Mammary epithelial cell (primary cell): ENCODE measurements at regions of chr13 and their contacts with region 1.

Region 1: DNA sequence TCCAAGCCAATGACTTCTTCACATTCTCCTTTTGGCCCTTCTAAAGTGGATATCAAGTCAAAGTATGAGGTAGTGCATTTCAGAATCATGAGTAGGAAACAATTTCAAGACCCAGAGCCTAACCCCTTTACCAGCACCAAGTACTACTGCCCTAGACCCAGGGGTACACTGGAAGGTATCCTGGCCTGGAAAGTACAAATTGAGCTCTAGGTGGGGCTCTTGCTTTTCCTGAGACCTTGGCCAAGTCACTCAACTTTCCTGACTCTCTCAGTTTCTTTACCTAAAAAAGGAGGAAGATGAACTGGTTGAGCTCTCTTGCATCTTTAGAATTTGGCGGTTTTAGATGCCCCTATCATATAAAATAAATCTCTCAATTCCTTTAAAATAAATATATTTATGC is 204.7 kb downstream of the FGF14 start:
- DNase-seq: peak; percentile 30
- H3K4me3 ChIP-seq: no peak overlapping the region
- H3K27ac ChIP-seq: no peak overlapping the region
- H3K4me1 ChIP-seq: peaks cover 43% of the 10 kb centered on the region
- H3K27me3 ChIP-seq: no peaks in the 10 kb centered on the region
- CTCF ChIP-seq: peak; percentile 48 to 65

Region 2: DNA sequence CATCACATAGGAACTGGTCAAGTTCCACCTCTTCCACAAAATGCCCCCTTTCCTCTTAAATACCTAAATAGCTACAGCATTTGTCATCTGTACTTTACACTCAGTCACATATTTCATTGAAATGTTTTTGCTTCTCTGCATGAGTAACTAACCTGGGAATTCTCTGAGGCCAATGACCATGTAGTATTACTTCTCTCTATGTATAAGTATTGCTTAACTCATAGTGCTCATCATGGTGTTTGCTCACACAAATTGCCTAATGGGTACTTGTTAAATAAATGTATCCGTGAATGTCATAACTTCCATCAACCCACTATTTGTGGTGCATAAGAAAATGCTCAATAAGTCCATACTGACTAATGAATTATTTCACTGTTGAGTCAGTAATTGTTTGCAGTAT is 89.1 kb after region 1 on chr13:
- CTCF ChIA-PET with region 1: no interaction called
- dilution Hi-C with region 1: no loop called
- in situ Hi-C with region 1: no loop called
- intact Hi-C with region 1: loop called (anchors 2 kb)
- DNase-seq: peak; percentile 93
- H3K4me3 ChIP-seq: no peak overlapping the region
- H3K27ac ChIP-seq: peak overlapping the region; percentile 88
- H3K4me1 ChIP-seq: peaks cover 31% of the 10 kb centered on the region
- H3K27me3 ChIP-seq: no peaks in the 10 kb centered on the region
- CTCF ChIP-seq: no peak

Region 3: DNA sequence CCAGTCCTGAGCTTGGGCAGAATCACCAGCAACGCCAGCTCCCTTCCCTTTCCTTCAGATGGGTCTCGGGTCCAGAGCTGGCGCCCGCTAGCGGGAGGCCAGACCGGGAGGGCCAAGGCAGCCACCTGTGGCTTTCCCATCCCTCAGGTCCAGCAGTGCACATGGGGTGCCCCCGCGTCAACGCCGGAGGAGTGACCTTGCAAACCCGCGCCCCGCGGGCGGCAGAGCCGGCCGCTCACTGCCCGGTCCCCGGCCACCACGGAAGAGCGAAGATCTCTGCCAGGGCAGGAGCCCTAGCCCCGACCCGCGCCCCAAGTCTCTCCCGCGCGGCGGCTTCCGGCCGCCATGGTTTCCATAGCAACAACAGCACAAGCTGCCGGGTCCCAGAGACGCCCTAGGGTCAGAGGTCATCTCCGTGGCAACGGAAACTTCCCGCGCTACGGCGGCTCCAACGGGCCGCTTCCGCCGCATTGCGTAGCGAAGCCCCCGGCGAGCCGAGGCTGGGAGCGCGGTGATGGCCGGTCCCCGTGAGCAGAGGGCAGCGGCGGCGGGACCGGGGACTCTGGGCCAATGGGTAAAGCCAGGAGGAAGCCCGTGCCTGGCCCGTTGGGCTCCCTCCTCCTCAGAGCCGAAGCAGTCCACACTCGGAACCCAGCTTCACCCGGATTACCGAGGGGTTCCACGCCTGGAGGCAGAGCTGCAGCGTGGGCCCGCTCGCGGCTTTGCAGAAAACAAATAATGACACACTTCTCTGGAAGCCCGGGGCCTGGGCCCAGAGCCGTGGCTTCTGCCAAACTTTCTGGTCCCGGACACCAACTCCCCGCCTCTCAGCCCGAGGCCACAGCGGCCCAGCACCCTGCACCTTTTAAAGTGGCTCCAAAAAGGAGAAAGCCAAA is 197.2 kb after region 1 on chr13:
- CTCF ChIA-PET with region 1: no interaction called
- dilution Hi-C with region 1: no loop called
- in situ Hi-C with region 1: no loop called
- intact Hi-C with region 1: loop called (anchors 5 kb)
- DNase-seq: peak; percentile 48
- H3K4me3 ChIP-seq: peak overlapping the region; percentile 60 to 81 (median 65)
- H3K27ac ChIP-seq: peak overlapping the region; percentile 38
- H3K4me1 ChIP-seq: peaks cover 10% of the 10 kb centered on the region
- H3K27me3 ChIP-seq: no peaks in the 10 kb centered on the region
- CTCF ChIP-seq: peak in 1 of 2 donors; percentile 48

Region 4: DNA sequence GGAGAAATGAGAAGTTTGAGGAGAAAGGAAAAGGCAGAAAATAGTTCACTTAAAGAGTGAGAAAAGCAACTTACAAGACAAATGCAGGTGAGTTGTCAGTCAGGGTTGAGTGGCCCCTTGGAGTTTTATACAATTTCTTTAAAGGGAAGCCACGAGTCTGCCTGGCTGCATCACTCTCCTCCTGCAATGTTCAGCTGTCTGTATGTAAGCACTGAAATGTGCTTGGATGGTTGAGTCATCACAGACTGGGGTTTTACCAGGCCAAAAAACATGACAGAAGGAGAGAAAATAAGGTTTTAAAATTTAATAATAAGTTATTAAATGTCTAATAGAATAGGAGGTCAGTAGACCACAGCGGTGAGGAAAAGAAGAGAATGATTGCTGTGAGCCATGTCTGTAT is 255.6 kb after region 1 on chr13:
- CTCF ChIA-PET with region 1: no interaction called
- dilution Hi-C with region 1: no loop called
- in situ Hi-C with region 1: loop called in 1 of 2 experiments (anchors 10 kb)
- intact Hi-C with region 1: loop called (anchors 1 kb)
- DNase-seq: peak; percentile 9
- H3K4me3 ChIP-seq: no peak overlapping the region
- H3K27ac ChIP-seq: no peak overlapping the region
- H3K4me1 ChIP-seq: no peaks in the 10 kb centered on the region
- H3K27me3 ChIP-seq: no peaks in the 10 kb centered on the region
- CTCF ChIP-seq: no peak

Region 5: DNA sequence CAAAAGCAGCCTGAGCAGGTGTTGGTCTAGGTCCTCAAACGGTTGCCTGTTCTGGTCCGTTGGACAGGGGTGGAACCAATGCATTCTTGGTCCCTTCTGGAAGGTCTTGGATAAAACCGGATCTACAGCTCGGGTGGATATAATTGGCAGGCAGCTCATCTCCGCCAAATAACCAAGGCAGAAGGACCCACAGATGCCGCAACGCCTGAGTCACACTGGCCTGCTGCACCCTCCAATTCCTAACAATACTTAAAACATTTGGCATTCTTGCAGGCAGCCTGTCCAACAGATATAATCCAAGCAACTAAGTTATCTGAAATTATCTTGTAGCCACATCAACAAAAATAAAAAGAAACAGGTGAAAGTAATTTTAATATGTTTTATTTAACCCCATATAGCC is 263.6 kb after region 1 on chr13:
- CTCF ChIA-PET with region 1: no interaction called
- dilution Hi-C with region 1: no loop called
- in situ Hi-C with region 1: loop called in 1 of 2 experiments (anchors 10 kb)
- intact Hi-C with region 1: loop called (anchors 1 kb)
- DNase-seq: no peak
- H3K4me3 ChIP-seq: no peak overlapping the region
- H3K27ac ChIP-seq: no peak overlapping the region
- H3K4me1 ChIP-seq: no peaks in the 10 kb centered on the region
- H3K27me3 ChIP-seq: no peaks in the 10 kb centered on the region
- CTCF ChIP-seq: no peak

Region 6: DNA sequence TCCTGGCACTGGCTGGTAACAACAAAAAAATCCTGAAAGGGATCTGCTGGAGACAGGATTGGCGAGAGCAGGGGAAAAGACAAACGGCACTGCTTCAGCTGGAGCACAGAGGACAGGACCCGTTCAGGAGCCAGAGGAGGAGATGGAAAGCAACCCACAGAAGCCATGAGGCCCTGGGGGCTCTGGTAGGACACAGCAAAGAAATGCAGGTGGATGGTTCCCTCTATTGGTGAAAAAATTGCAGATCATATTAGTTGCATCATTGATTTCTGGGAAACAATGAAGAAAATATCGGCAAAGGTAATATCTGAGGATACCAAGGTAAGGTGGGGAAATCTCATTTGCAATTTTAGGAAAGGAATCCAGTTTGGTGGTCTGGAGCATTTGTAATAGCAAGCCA is 373.9 kb after region 1 on chr13:
- CTCF ChIA-PET with region 1: no interaction called
- dilution Hi-C with region 1: no loop called
- in situ Hi-C with region 1: no loop called
- intact Hi-C with region 1: loop called (anchors 5 kb)
- DNase-seq: no peak
- H3K4me3 ChIP-seq: no peak overlapping the region
- H3K27ac ChIP-seq: no peak overlapping the region
- H3K4me1 ChIP-seq: no peaks in the 10 kb centered on the region
- H3K27me3 ChIP-seq: no peaks in the 10 kb centered on the region
- CTCF ChIP-seq: peak; percentile 7 to 32